ENCODE measurements at regions of chr5 and their contacts with region 1.

Region 1: GRCh38 chr5:10552183-10553143 is 11.4 kb upstream of the ANKRD33B start:
- DNase-seq: no peak
- H3K4me3 ChIP-seq: no peak overlapping the region
- H3K27ac ChIP-seq: no peak overlapping the region
- H3K4me1 ChIP-seq: no peaks in the 10 kb centered on the region
- H3K27me3 ChIP-seq: no peaks in the 10 kb centered on the region
- CTCF ChIP-seq: no peak
- POLR2A ChIP-seq: no peak

Region 2: DNA sequence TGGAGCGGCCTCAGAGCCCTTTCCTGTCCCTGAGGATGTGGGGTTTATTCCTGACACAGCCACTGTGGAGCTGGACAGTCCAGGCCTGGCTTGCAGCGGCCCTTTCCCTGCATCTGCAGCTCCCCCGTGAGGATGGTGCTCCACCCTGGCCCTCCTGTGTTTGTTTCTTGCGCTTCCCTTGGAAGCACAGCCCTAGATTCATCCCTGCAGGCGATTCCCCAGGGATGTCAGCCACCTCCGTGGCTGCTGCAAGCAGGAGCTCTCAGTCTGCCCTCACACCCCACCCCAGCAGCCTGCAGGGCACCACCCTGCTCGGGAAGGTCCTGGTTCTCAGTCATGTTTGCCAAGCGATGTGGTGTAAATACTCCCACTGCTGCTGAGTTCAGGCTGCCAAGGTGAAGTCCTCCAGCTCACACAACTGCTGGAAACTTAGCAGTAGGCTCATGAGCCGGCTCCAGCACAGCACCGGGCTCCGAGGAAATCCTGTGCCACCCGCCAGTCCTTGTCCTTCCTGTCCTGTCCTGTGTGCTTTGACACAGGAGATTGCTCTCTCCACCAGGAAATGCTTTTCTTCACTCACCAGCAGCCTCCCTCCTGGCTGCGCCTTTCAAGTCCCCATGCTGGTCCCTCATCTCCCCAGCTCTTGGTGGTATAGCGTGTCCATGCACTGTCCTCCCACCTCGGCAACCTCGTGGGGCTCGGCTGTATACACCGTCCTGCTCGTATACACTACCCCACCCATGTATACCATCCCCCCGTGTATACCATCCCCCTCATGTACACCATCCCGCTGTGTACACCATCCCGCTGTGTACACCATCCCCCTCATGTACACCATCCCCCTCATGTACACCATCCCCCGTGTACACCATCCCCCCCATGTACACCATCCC is 94.5 kb before region 1 on chr5:
- intact Hi-C with region 1: loop called (anchors 5 kb)
- DNase-seq: peak; percentile 44
- H3K4me3 ChIP-seq: no peak overlapping the region
- H3K27ac ChIP-seq: no peak overlapping the region
- H3K4me1 ChIP-seq: peaks cover 6% of the 10 kb centered on the region
- H3K27me3 ChIP-seq: no peaks in the 10 kb centered on the region
- CTCF ChIP-seq: no peak
- POLR2A ChIP-seq: no peak

Measured in prostate gland (tissue), 2 donors.